ENCODE measurements at regions of chr6 and their contacts with region 1.

Region 1: GRCh38 chr6:52598123-52598823 is 21.4 kb upstream of the TRAM2 start:
- DNase-seq: peak; percentile 84
- H3K4me3 ChIP-seq: peak overlapping the region in 3 of 4 donors; percentile 10 to 36 (median 34)
- H3K27ac ChIP-seq: peak overlapping the region in 3 of 4 donors; percentile 14 to 41 (median 30)
- H3K4me1 ChIP-seq: peaks cover 0 to 40% (median 25%) of the 10 kb centered on the region in 4 donors
- H3K27me3 ChIP-seq: no peaks in the 10 kb centered on the region
- CTCF ChIP-seq: peak; percentile 71 to 79 (median 73)
- EP300 ChIP-seq: no peak
- POLR2A ChIP-seq: no peak

Region 2: DNA sequence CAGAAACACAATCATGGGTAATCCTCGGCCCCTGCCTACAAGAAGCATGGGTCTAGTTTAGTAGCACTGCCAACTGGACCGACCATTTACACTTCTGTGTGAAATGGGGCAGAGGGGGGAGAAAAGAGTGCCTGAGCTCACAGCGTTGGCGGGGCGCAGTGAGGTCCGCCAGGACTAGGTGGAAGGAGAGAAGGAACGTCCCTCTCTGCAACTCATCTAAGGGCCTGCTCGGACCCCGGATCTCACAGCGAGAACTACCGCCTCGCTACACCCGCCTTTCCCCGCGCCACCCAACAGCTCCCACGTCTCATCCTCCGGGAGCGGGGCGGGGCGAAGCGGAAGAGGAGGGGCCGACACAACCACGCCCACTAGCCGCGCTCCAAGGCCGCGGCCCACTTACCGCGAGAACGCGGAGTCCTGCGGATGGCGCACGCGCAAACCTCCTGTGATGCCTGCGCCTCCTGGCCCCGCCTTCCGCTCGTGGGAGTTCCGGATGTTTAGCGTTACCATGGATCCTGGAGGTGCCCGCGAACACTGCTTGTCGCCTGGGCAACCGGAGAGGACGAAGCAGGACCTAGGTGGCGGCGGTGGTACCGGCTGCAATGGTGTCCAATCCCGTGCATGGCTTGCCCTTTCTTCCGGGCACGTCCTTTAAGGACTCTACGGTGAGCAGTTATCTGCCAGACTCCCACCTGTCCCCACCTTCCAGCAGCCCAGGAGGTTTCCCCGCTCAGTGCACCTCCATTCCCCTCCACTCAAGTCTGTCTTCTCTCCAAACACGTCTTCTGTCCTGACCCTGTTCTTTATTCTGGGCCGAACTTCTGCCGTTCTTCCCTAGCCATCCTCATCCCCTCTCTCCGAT is 178.2 kb before region 1 on chr6 and contains the start of gene EFHC1:
- intact Hi-C with region 1: loop called (anchors 1 kb)
- DNase-seq: peak; percentile 99
- H3K4me3 ChIP-seq: peak within 1 kb of the TSS; percentile 61 to 97 (median 88)
- H3K27ac ChIP-seq: peak within 1 kb of the TSS; percentile 76 to 88 (median 85)
- H3K4me1 ChIP-seq: peaks cover 0 to 24% (median 14%) of the 10 kb centered on the region in 4 donors
- H3K27me3 ChIP-seq: no peaks in the 10 kb centered on the region
- CTCF ChIP-seq: no peak
- EP300 ChIP-seq: peak in 1 of 4 donors; percentile 34
- POLR2A ChIP-seq: peak; percentile 48 to 60
- total RNA-seq, gene EFHC1: 15.9 to 38.5 (median 19.1) TPM

Region 3: DNA sequence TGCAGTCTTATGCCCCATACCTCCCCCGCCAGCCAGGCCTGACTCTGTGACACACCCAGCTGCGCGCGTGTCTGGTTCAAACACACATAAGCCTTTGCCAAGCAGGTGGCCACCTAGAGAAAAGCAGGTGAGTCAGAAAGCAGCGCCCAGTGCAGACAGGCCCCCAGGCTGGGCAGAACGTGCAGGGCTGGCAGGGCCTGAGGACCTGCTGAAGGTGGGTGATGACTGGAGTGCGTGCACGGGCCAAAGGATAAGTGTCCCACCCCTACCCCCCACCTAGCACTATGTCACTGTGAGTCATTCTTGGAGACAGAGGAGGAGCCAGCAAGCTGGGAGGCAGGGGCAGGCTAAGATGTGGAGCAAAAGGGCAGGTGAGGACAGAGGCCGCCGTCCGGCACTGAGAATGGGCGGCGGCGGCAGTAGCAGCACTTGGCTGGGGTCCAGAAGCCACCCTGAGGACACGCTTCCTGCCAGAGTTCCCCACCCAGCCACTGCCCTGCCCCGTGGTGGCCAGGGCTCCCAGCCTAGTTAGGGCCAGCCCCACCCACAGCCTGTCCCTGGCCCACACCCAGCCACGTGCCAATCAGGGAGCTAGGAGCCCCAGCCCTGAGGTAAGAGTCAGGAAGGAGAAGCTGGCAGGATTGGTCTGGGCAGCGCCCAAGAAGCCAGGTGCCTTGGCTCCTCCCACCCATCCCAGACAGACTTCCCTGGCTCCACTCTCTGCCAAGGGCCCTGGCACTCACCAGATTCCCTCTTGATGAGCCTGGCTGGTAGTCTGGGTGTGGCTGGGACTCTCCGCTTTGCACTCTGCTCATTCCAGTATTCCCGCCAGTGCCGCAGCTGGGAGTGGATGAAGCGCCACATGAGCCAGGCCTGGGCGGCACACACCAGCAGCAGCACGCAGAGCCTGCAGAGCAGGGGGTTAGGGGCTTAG is 94.2 kb before region 1 on chr6:
- intact Hi-C with region 1: loop called (anchors 5 kb)
- DNase-seq: peak; percentile 83
- H3K4me3 ChIP-seq: no peak overlapping the region
- H3K27ac ChIP-seq: peak overlapping the region; percentile 56 to 72 (median 68)
- H3K4me1 ChIP-seq: peaks cover 0 to 57% (median 36%) of the 10 kb centered on the region in 4 donors
- H3K27me3 ChIP-seq: no peaks in the 10 kb centered on the region
- CTCF ChIP-seq: no peak
- EP300 ChIP-seq: no peak
- POLR2A ChIP-seq: no peak